ENCODE measurements at regions of chr2 and their contacts with region 1.

Region 1: DNA sequence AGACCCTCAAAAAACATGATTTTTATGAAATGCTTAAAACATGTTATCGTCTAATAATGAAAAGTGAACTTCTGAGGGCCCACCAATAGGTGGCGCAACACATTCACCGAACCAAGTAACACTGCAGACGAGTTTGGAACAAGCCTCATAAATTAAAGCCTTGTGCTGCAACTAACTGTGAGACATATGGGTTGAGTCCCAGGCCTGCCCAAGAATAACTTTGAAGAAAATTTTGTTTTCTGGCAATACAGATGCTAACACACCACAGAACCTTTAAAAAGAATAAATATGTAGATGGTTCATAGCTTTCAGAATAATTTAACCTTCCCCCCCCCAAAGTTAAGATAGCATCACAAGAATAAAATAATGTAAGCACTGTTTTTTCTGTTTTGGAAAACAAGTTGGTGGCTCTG is 285.8 kb downstream of the RNF144A start:
- DNase-seq: peak; percentile 23
- H3K4me3 ChIP-seq: no peak overlapping the region
- CTCF ChIP-seq: peak; percentile 74

Region 2: DNA sequence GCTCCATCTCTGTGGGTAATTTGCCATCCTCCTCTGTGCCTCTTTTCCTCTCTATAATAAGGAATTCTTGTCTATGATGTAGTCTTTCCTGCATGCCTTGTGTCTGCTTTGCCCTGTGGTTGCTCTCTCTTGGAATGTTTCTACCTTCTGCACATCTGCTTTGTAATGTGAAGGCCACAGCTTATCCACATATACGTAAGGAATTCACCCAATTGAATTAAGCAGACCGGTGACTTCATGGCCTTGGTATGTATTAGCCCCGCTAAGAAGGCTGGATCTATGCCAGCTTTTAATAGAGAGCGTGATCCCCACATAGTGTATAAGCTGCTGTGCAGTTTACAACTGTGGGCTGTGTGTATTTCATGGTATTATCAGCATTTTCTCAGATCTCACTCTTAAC is 11.1 kb before region 1 on chr2:
- CTCF ChIA-PET with region 1: interaction called, 31 read pairs
- POLR2A ChIA-PET with region 1: no interaction called
- DNase-seq: peak; percentile 93
- H3K4me3 ChIP-seq: no peak overlapping the region
- CTCF ChIP-seq: no peak